GM12878 (cell line): ENCODE measurements at regions of chr2 and their contacts with region 1.

Region 1: DNA sequence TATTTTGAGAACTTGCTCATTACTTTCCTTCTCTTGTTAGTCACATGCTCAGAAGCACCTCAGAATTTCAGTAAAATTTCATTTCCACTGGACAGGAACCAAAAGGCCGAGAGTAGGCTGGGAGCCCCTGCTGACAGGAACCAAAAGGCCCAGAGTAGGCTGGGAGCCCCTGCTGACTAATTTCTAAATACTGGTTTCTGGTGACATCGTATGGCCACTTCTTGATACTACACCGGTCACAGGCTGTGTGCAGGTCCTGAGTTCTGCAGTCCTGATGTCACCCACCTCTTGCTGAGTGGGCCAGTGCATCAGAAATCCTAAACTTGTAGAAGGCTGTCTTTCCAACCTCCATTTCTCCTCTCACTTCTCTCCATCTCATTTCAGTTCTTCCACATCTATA is 17.7 kb upstream of the EN1 start:
- DNase-seq: peak; percentile 19
- ATAC-seq: peak; percentile 99
- H3K4me3 ChIP-seq: no peak overlapping the region
- H3K27ac ChIP-seq: no peak overlapping the region
- H3K4me1 ChIP-seq: no peaks in the 10 kb centered on the region
- H3K27me3 ChIP-seq: peaks cover 2 to 7% of the 10 kb centered on the region in 2 experiments; a peak in 3 of 4 replicates
- CTCF ChIP-seq: peak; percentile 62 to 79 (median 66); a peak in 5 of 6 replicates
- EP300 ChIP-seq: no peak
- POLR2A ChIP-seq: no peak
- RAD21 ChIP-seq: peak; percentile 77

Region 2: GRCh38 chr2:118032169-118033013 is 832.7 kb before region 1 on chr2:
- CTCF ChIA-PET with region 1: no interaction called
- POLR2A ChIA-PET with region 1: no interaction called
- RAD21 ChIA-PET with region 1: no interaction called
- SMC1A ChIA-PET with region 1: interaction called, 3 read pairs
- in situ Hi-C with region 1: loop called (anchors 25 kb)
- intact Hi-C with region 1: loop called (anchors 5 kb)
- DNase-seq: no peak
- ATAC-seq: peak; percentile 95
- H3K4me3 ChIP-seq: no peak overlapping the region
- H3K27ac ChIP-seq: no peak overlapping the region
- H3K4me1 ChIP-seq: no peaks in the 10 kb centered on the region
- H3K27me3 ChIP-seq: no peaks in the 10 kb centered on the region; a peak in 1 of 4 replicates
- CTCF ChIP-seq: peak; percentile 73 to 90 (median 74)
- EP300 ChIP-seq: no peak
- POLR2A ChIP-seq: no peak
- RAD21 ChIP-seq: peak; percentile 38

Region 3: DNA sequence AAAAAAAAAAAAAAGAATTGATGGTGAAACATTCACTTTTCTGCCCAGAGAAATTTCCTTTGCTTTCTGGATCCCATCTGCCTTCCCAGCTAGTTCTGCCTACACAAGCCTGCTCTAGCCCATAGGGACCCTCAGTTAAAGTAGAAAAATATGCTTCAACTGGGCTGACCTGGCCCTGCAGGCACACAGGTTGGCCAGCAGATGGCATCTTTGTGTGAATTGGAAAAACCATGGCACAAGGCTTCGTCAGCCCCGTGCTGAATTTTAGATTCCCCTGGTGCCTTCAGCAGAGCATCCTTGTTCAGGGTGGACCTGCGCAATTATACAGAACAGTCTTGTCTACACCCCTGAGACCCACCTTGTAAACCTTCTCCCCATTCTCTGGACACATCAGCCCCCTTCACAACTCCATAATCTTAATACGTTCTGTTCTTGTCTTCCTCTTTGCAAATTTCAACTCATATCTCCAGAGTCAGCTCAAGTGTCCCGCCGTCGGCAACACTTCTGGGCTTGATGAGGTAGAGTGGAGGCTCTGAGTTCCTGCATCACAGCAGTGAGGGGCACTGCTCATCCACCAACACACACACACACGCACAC is 662.3 kb before region 1 on chr2:
- CTCF ChIA-PET with region 1: no interaction called
- POLR2A ChIA-PET with region 1: no interaction called
- RAD21 ChIA-PET with region 1: no interaction called
- SMC1A ChIA-PET with region 1: no interaction called
- in situ Hi-C with region 1: no loop called
- intact Hi-C with region 1: loop called (anchors 1 kb)
- DNase-seq: no peak
- ATAC-seq: peak; percentile 98
- H3K4me3 ChIP-seq: no peak overlapping the region
- H3K27ac ChIP-seq: no peak overlapping the region
- H3K4me1 ChIP-seq: no peaks in the 10 kb centered on the region
- H3K27me3 ChIP-seq: no peaks in the 10 kb centered on the region; a peak in 1 of 4 replicates
- CTCF ChIP-seq: peak; percentile 84 to 91 (median 90)
- EP300 ChIP-seq: no peak
- POLR2A ChIP-seq: no peak
- RAD21 ChIP-seq: peak; percentile 62

Region 4: DNA sequence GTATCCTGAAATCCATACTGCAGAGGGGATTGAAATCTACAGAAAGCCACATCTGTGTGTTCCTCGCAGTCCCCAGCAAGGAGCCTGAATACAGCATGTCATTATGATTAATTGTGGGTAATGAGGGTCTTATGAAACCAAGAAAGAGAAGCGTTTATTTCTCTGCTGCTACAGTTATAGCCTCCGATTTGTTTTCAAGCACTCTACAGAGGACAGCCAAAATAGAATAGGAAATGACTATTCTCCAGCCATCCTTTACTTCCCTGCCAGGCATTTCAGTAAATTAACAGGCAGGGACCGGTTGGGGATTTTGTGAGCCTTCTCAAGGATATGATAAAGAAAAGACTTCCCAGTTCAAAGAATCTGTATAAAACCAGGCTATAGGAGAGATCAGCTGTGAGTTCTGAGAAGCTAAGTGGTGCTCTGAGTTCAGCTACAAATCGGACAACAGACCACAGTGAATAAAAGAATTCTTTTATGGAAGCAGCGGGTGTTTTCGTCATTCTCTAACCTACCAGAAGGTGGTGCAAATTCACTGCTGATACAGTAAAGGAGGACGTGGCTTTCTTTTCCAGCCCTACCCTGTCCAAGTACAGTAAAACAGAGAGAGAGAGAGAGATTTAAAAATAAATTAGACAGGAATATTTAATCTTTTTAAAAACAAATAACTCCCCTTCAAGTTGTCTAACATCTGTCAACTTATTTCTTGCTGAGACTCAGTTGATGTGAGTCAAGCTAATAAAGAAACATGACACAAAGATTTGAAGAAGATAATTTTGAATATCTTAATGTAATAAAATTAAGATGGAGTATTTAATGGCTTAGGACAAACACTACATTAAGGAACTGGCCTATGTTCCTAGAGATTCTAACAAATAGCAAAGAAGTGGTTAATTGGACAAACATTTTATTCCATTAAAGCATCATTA is 643.2 kb before region 1 on chr2:
- CTCF ChIA-PET with region 1: interaction called, 5 read pairs
- POLR2A ChIA-PET with region 1: no interaction called
- RAD21 ChIA-PET with region 1: interaction called, 3 read pairs
- SMC1A ChIA-PET with region 1: interaction called, 3 read pairs
- in situ Hi-C with region 1: loop called (anchors 5 kb)
- intact Hi-C with region 1: loop called (anchors 1 kb)
- DNase-seq: no peak
- ATAC-seq: peak; percentile 79
- H3K4me3 ChIP-seq: no peak overlapping the region
- H3K27ac ChIP-seq: no peak overlapping the region
- H3K4me1 ChIP-seq: peaks cover 15% of the 10 kb centered on the region; the same call in 1 of the 2 replicates
- H3K27me3 ChIP-seq: no peaks in the 10 kb centered on the region
- CTCF ChIP-seq: peak; percentile 61 to 88 (median 64)
- EP300 ChIP-seq: no peak
- POLR2A ChIP-seq: no peak
- RAD21 ChIP-seq: peak; percentile 91

Region 5: DNA sequence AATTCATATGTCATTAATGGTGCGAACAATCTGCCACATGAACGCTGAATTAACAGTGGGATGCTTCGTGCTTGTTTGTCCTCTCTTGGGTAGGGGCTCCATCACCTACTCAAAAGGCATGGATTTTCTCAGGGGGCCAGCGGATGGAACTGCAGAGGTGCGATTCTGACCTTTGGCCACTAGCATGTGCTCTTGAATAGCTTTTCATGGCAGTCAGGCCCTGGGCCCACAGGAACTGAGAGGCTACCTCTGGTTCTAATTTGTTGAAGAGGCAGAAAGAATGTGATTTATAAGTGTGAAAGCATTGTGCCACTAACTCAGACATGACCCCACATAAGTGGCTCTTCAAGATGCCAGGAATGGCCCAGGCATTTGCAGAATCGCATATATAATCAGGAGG is 493.6 kb before region 1 on chr2:
- CTCF ChIA-PET with region 1: interaction called, 3 read pairs
- POLR2A ChIA-PET with region 1: no interaction called
- RAD21 ChIA-PET with region 1: no interaction called
- SMC1A ChIA-PET with region 1: no interaction called
- in situ Hi-C with region 1: no loop called
- intact Hi-C with region 1: loop called (anchors 1 kb)
- DNase-seq: no peak
- ATAC-seq: peak; percentile 76
- H3K4me3 ChIP-seq: no peak overlapping the region
- H3K27ac ChIP-seq: no peak overlapping the region
- H3K4me1 ChIP-seq: no peaks in the 10 kb centered on the region
- H3K27me3 ChIP-seq: no peaks in the 10 kb centered on the region
- CTCF ChIP-seq: peak; percentile 48 to 60 (median 60); a peak in 5 of 6 replicates
- EP300 ChIP-seq: no peak
- POLR2A ChIP-seq: no peak
- RAD21 ChIP-seq: peak; percentile 63

Region 6: DNA sequence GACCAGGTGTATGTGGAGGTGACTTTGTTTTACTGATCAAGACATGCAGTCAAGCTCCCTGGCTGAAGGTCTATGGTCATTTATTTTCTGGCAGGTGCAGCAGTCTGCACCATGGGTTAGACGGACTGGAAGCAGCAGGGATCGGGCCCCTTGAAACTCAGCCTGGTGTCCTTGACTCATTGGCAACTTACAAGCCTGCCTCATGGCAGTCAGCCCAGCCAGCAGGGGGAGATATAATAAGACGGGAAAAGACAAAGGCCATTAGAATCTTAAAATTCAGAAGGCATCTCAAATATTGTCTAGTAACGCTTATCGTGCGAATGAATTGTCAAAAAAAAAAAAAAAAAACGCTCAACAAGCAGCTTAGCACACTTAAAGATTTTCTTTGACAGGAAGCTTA is 325.8 kb before region 1 on chr2:
- CTCF ChIA-PET with region 1: no interaction called
- POLR2A ChIA-PET with region 1: no interaction called
- RAD21 ChIA-PET with region 1: no interaction called
- SMC1A ChIA-PET with region 1: no interaction called
- in situ Hi-C with region 1: no loop called
- intact Hi-C with region 1: loop called (anchors 2 kb)
- DNase-seq: no peak
- ATAC-seq: peak; percentile 49; the same call in 2 of the 3 replicates
- H3K4me3 ChIP-seq: no peak overlapping the region
- H3K27ac ChIP-seq: no peak overlapping the region
- H3K4me1 ChIP-seq: no peaks in the 10 kb centered on the region
- H3K27me3 ChIP-seq: no peaks in the 10 kb centered on the region
- CTCF ChIP-seq: peak in 2 of 3 experiments; percentile 29 to 34; a peak in 4 of 6 replicates
- EP300 ChIP-seq: no peak
- POLR2A ChIP-seq: no peak
- RAD21 ChIP-seq: peak; percentile 21; the same call in 1 of the 2 replicates

Region 7: GRCh38 chr2:119011162-119011909 is 146.2 kb after region 1 on chr2:
- CTCF ChIA-PET with region 1: no interaction called
- POLR2A ChIA-PET with region 1: no interaction called
- RAD21 ChIA-PET with region 1: no interaction called
- SMC1A ChIA-PET with region 1: no interaction called
- in situ Hi-C with region 1: no loop called
- intact Hi-C with region 1: no loop called
- DNase-seq: no peak
- ATAC-seq: peak; percentile 75
- H3K4me3 ChIP-seq: no peak overlapping the region
- H3K27ac ChIP-seq: no peak overlapping the region
- H3K4me1 ChIP-seq: no peaks in the 10 kb centered on the region
- H3K27me3 ChIP-seq: peaks cover 8 to 11% of the 10 kb centered on the region in 2 experiments
- CTCF ChIP-seq: peak; percentile 34 to 47 (median 45); a peak in 4 of 6 replicates
- EP300 ChIP-seq: no peak
- POLR2A ChIP-seq: no peak
- RAD21 ChIP-seq: peak; percentile 51